HCT116 (cell line): ENCODE measurements at regions of chr1 and their contacts with region 1.

Region 1: GRCh38 chr1:99490031-99490430 is 155.9 kb upstream of the PALMD start:
- DNase-seq: no peak
- ATAC-seq: no peak
- H3K4me3 ChIP-seq: no peak overlapping the region
- H3K27ac ChIP-seq: no peak overlapping the region
- H3K4me1 ChIP-seq: no peaks in the 10 kb centered on the region
- H3K27me3 ChIP-seq: no peaks in the 10 kb centered on the region
- CTCF ChIP-seq: no peak
- POLR2A ChIP-seq: no peak
- RAD21 ChIP-seq: no peak

Region 2: GRCh38 chr1:99469550-99469971 is 20.5 kb before region 1 on chr1:
- CTCF ChIA-PET with region 1: no interaction called
- POLR2A ChIA-PET with region 1: no interaction called
- RAD21 ChIA-PET with region 1: no interaction called
- intact Hi-C with region 1: loop called (anchors 2 kb)
- DNase-seq: no peak
- ATAC-seq: no peak
- H3K4me3 ChIP-seq: no peak overlapping the region
- H3K27ac ChIP-seq: no peak overlapping the region
- H3K4me1 ChIP-seq: no peaks in the 10 kb centered on the region
- H3K27me3 ChIP-seq: no peaks in the 10 kb centered on the region
- CTCF ChIP-seq: no peak
- POLR2A ChIP-seq: no peak
- RAD21 ChIP-seq: no peak